ENCODE measurements at regions of chr3 and their contacts with region 1.

Region 1: GRCh38 chr3:188954590-188955208 is 217.1 kb upstream of the TPRG1 start:
- DNase-seq: peak; percentile 80
- H3K4me3 ChIP-seq: no peak overlapping the region
- H3K27ac ChIP-seq: no peak overlapping the region
- H3K27me3 ChIP-seq: no peaks in the 10 kb centered on the region
- CTCF ChIP-seq: peak; percentile 97

Region 2: GRCh38 chr3:187739561-187740332 is 1215.0 kb before region 1 on chr3:
- in situ Hi-C with region 1: loop called (anchors 5 kb)
- DNase-seq: peak; percentile 86
- H3K4me3 ChIP-seq: peak overlapping the region; percentile 68
- H3K27ac ChIP-seq: peak overlapping the region; percentile 95
- H3K27me3 ChIP-seq: no peaks in the 10 kb centered on the region
- CTCF ChIP-seq: peak; percentile 82

Region 3: DNA sequence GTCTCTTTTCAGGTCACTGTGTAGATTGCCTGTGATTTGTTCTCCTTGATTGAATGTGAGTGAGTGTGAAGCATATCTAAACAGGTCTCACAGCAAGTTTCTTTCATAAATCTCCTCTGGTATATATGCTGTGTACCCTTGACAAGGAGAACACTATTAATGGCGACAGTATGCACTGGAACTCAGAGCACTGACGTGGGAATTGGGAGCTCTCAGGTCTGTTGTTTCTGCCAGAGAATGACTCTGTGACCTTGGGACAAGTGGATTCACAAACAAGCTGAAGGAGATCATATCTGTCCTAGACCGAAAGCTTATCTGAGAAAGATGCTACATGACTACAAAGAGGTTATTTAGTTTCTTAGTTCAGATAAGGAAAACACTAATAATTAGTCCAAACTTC is 109.2 kb before region 1 on chr3:
- in situ Hi-C with region 1: no loop called
- DNase-seq: no peak
- H3K4me3 ChIP-seq: no peak overlapping the region
- H3K27ac ChIP-seq: no peak overlapping the region
- H3K27me3 ChIP-seq: no peaks in the 10 kb centered on the region
- CTCF ChIP-seq: no peak

Measured in brain microvascular endothelial cell (primary cell).